ENCODE measurements at regions of chr6 and their contacts with region 1.

Region 1: DNA sequence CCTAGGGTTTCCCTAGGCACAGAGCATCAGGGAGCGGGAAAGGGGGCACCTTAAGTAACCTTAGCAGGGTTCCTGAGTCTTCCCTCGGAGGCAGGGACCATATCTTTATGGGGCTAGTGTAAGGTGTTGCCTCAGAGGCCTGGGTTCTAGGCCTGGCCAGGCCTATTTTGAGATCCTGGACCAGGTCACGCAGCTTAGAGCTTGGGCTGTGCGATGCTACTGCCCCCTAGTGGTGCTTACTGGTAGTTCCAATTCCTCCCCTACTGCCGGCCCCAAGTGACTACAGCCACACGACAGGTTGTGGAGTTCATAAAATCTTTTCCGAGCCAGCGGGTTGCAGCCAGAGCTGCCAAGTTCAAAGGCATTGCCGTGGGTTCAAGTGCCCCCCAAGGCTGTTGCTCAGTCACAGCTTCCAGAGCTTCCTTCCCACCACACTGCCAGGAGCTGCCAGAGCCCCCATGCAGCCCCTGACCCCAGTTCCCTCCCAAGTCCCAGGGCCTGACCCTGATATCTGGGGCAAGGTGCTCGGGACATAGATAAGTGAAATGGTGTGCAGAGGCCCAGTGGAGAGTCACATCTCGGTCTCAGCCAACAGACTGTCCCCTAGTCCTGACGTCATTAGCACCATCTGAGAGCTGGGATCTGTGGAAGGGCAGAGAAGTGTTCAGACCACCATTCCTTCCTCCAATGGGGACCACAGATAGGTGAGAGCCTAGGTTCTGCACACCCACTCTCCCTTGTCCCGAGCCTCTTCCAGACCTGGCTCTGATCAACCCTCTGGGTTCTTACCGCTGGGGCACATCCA is 3.3 kb downstream of the LRRC73 start:
- DNase-seq: peak; percentile 67 to 94
- H3K4me3 ChIP-seq: no peak overlapping the region
- H3K27ac ChIP-seq: no peak overlapping the region
- H3K4me1 ChIP-seq: peaks cover 0 to 14% (median 8%) of the 10 kb centered on the region in 4 experiments; a peak in 5 of 7 replicates
- H3K27me3 ChIP-seq: peaks cover 0 to 19% (median 15%) of the 10 kb centered on the region in 4 experiments; a peak in 5 of 7 replicates
- CTCF ChIP-seq: peak in 2 of 3 experiments; percentile 97 to 98; a peak in 3 of 4 replicates
- EP300 ChIP-seq: no peak
- POLR2A ChIP-seq: no peak
- RAD21 ChIP-seq: peak; percentile 90 to 93

Region 2: GRCh38 chr6:43203029-43203717 is 303.7 kb before region 1 on chr6:
- CTCF ChIA-PET with region 1: no interaction called
- POLR2A ChIA-PET with region 1: no interaction called
- DNase-seq: no peak
- H3K4me3 ChIP-seq: no peak overlapping the region
- H3K27ac ChIP-seq: no peak overlapping the region
- H3K4me1 ChIP-seq: no peaks in the 10 kb centered on the region
- H3K27me3 ChIP-seq: no peaks in the 10 kb centered on the region
- CTCF ChIP-seq: no peak
- EP300 ChIP-seq: no peak
- POLR2A ChIP-seq: no peak
- RAD21 ChIP-seq: no peak

Region 3: GRCh38 chr6:43263314-43264178 is 243.3 kb before region 1 on chr6:
- CTCF ChIA-PET with region 1: interaction called, 25 read pairs
- POLR2A ChIA-PET with region 1: no interaction called
- DNase-seq: peak; percentile 49 to 90
- H3K4me3 ChIP-seq: no peak overlapping the region
- H3K27ac ChIP-seq: no peak overlapping the region
- H3K4me1 ChIP-seq: peaks cover 0 to 15% (median 5%) of the 10 kb centered on the region in 4 experiments; a peak in 6 of 7 replicates
- H3K27me3 ChIP-seq: peaks cover 2 to 9% (median 7%) of the 10 kb centered on the region in 4 experiments
- CTCF ChIP-seq: peak in 2 of 3 experiments; percentile 91 to 98; a peak in 3 of 4 replicates
- EP300 ChIP-seq: no peak
- POLR2A ChIP-seq: no peak
- RAD21 ChIP-seq: peak; percentile 96 to 97

Region 4: DNA sequence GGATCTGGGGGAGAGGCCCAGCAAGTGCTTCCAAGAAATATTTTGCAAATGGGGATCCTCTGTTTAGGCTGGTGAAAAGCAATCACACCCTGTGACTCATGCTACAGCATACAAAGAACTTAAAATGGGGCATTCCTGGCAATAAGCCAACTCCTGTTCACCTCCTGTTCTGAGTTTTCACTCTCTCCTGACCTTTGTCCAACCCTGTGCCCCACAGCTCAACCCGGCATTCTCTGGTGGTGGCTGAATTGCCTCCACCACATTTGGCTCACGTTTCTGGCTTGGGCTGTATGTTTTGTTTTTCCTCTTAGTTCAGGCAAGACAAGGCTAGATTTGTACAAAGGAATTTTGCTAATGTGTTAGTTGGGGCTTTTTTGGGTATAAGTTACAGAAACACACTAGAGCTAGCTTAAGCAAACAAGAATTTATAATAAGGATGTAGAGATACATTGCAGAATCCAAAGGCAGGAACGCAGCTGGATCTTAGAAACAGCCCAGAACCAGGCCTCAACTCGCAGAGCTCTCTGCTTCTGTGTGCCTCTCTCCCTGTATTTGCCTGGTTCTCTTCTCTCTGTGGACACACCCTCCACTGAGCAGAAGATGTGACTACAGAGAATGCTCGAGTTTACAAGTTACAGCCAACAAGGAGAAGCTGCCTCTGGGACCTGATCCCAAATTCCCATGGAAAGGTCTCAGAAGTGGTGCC is 70.1 kb before region 1 on chr6:
- CTCF ChIA-PET with region 1: interaction called, 27 read pairs
- POLR2A ChIA-PET with region 1: interaction called, 4 read pairs
- DNase-seq: no peak
- H3K4me3 ChIP-seq: no peak overlapping the region
- H3K27ac ChIP-seq: no peak overlapping the region
- H3K4me1 ChIP-seq: no peaks in the 10 kb centered on the region; a peak in 2 of 7 replicates
- H3K27me3 ChIP-seq: no peaks in the 10 kb centered on the region
- CTCF ChIP-seq: no peak
- EP300 ChIP-seq: no peak
- POLR2A ChIP-seq: no peak
- RAD21 ChIP-seq: no peak

Region 5: DNA sequence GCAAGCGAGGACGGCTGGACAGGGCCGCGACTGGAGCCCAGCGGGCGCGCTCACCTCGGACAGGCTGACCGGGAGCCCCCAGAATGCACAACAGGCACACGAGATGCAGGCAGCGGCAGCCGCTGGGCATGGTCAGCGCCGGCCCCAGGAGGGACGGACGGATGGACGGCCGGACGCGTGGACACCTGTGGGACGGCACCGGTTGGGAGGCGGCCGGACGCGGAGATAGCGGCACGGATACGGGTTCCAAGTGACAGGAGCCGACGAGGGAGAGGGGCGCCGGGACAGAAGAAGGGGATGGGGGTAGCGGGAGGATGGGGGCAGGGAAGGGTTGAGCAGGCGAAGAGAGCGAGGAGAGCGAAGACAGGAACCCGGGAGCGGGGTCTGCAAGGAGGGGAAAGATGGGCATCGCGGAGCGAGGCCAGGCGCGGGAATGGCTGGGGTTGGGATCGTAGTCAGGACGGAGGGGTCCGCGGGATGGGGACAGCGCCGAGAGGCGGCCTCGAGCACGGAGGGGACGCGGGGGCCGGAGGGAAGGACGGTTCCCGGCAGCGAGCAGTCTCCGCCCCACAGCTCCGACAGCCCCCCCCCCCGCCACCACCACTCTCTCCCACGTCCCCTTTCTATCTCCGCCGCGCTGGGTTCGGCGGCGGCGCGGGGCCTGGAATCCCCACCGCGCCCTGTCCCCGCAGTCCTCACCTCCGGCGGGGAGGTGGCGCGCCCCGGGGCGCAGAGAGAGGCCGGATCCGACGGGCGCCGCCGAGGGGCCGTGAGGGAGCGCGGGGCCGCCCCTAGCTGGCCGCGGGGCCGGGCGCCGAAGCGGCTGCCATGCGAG is 52.0 kb before region 1 on chr6:
- CTCF ChIA-PET with region 1: interaction called, 495 read pairs
- POLR2A ChIA-PET with region 1: interaction called, 43 read pairs
- DNase-seq: peak in 1 of 2 experiments; percentile 58
- H3K4me3 ChIP-seq: peak overlapping the region; percentile 19 to 63 (median 40)
- H3K27ac ChIP-seq: no peak overlapping the region
- H3K4me1 ChIP-seq: peaks cover 0 to 4% (median 2%) of the 10 kb centered on the region in 4 experiments; a peak in 3 of 7 replicates
- H3K27me3 ChIP-seq: peaks cover 7 to 25% (median 19%) of the 10 kb centered on the region in 4 experiments
- CTCF ChIP-seq: no peak
- EP300 ChIP-seq: no peak
- POLR2A ChIP-seq: no peak; a peak in 1 of 3 replicates
- RAD21 ChIP-seq: no peak

Region 6: GRCh38 chr6:43489277-43490072 is 17.4 kb before region 1 on chr6:
- CTCF ChIA-PET with region 1: interaction called, 536 read pairs
- POLR2A ChIA-PET with region 1: interaction called, 27 read pairs
- DNase-seq: no peak
- H3K4me3 ChIP-seq: no peak overlapping the region
- H3K27ac ChIP-seq: no peak overlapping the region
- H3K4me1 ChIP-seq: peaks cover 3 to 10% (median 6%) of the 10 kb centered on the region in 4 experiments; a peak in 3 of 7 replicates
- H3K27me3 ChIP-seq: no peaks in the 10 kb centered on the region
- CTCF ChIP-seq: no peak
- EP300 ChIP-seq: no peak
- POLR2A ChIP-seq: no peak
- RAD21 ChIP-seq: no peak

Region 7: GRCh38 chr6:43516697-43517504 is 10.0 kb after region 1 on chr6 and contains the starts of genes POLR1C and YIPF3:
- CTCF ChIA-PET with region 1: interaction called, 19 read pairs
- POLR2A ChIA-PET with region 1: interaction called, 147 read pairs
- DNase-seq: peak; percentile 91 to 95
- H3K4me3 ChIP-seq: peak within 1 kb of the TSS; percentile 86 to 100 (median 96)
- H3K27ac ChIP-seq: peak within 1 kb of the TSS; percentile 82
- H3K4me1 ChIP-seq: peaks cover 4 to 17% (median 8%) of the 10 kb centered on the region in 4 experiments; a peak in 6 of 7 replicates
- H3K27me3 ChIP-seq: no peaks in the 10 kb centered on the region
- CTCF ChIP-seq: no peak
- EP300 ChIP-seq: 0 out of 3 replicates have a peak, but pooled peaks of 1 of the 2 experiments have one; percentile 15
- POLR2A ChIP-seq: peak in 1 of 2 experiments; percentile 89; a peak in 1 of 3 replicates
- RAD21 ChIP-seq: no peak
- total RNA-seq, gene POLR1C: 46.9 and 49.6 TPM in 2 replicates
- total RNA-seq, gene YIPF3: 77.2 and 78.2 TPM in 2 replicates

Region 8: GRCh38 chr6:43604174-43604573 is 97.3 kb after region 1 on chr6:
- CTCF ChIA-PET with region 1: no interaction called
- POLR2A ChIA-PET with region 1: no interaction called
- DNase-seq: no peak
- H3K4me3 ChIP-seq: no peak overlapping the region
- H3K27ac ChIP-seq: no peak overlapping the region
- H3K4me1 ChIP-seq: no peaks in the 10 kb centered on the region
- H3K27me3 ChIP-seq: no peaks in the 10 kb centered on the region
- CTCF ChIP-seq: no peak
- EP300 ChIP-seq: no peak
- POLR2A ChIP-seq: no peak
- RAD21 ChIP-seq: no peak

Region 9: DNA sequence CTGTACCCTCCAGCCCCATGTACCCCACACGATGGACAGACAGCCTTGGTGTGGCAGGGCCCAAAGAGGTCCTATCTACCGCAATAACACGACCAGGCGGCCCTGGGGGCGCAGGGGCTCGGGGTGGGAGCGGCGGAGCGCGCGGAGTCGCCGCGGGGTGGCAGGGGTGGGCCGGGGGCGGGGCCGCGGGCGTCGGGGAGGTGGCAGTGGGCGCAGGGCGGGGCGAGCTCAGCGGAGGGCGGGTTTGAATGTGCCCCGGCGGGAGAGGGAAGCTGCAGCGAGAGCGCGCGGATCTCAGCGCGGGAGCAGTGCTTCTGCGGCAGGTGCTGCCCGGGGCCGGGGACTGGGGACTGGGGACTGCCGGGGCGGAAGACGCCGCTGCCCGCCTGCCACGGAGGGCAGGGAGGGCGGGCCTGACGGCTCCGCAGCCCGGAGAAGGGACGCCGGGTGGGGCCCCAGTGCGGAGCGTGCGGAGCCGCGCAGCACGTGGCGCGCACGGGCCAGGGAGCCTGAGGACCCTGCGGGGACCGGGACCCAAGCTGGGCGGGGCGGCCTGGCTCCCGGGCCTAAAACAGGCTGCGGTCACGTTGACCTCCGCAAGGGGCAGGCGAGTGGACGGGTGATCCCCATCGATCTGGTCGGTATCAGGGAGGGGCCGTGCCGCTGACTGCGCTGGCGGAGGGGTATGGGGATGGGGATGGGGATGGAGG is 716.6 kb after region 1 on chr6 and contains the start of gene SLC29A1:
- CTCF ChIA-PET with region 1: no interaction called
- POLR2A ChIA-PET with region 1: no interaction called
- DNase-seq: peak in 1 of 2 experiments; percentile 86
- H3K4me3 ChIP-seq: peak within 1 kb of the TSS; percentile 65 to 90 (median 78)
- H3K27ac ChIP-seq: peak within 1 kb of the TSS; percentile 69; the same call in 1 of the 2 replicates
- H3K4me1 ChIP-seq: peaks cover 17 to 51% (median 35%) of the 10 kb centered on the region in 4 experiments
- H3K27me3 ChIP-seq: no peaks in the 10 kb centered on the region
- CTCF ChIP-seq: peak in 2 of 3 experiments; percentile 39 to 44; a peak in 3 of 4 replicates
- EP300 ChIP-seq: no peak
- POLR2A ChIP-seq: peak in 1 of 2 experiments; percentile 65; a peak in 2 of 3 replicates
- RAD21 ChIP-seq: peak; percentile 3 to 42; a peak in 2 of 4 replicates
- total RNA-seq, gene SLC29A1: 187 and 196 TPM in 2 replicates